ENCODE measurements at regions of chr6 and their contacts with region 1.

Region 1: DNA sequence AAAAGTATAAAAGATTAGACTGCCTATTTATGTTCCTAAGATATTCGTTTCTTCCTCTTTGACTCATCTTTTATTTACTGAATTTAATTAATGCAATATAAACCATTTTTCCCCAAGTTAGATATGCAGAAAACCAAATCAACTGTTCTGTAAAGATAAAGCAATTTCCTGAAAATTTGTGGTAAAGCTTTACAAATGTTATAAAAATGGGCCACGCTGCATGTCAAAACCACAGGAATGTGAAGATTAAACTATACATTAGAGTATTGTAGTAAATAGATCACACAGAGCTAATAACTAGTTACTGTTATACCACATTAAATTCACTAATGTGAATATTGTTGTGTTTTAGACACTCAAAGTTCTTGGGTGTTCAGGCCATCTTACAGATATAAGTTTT is 83.4 kb downstream of the OPN5 start:
- DNase-seq: no peak
- ATAC-seq: no peak
- H3K4me3 ChIP-seq: no peak overlapping the region
- H3K27ac ChIP-seq: no peak overlapping the region
- H3K4me1 ChIP-seq: no peaks in the 10 kb centered on the region
- H3K27me3 ChIP-seq: no peaks in the 10 kb centered on the region
- CTCF ChIP-seq: no peak

Region 2: DNA sequence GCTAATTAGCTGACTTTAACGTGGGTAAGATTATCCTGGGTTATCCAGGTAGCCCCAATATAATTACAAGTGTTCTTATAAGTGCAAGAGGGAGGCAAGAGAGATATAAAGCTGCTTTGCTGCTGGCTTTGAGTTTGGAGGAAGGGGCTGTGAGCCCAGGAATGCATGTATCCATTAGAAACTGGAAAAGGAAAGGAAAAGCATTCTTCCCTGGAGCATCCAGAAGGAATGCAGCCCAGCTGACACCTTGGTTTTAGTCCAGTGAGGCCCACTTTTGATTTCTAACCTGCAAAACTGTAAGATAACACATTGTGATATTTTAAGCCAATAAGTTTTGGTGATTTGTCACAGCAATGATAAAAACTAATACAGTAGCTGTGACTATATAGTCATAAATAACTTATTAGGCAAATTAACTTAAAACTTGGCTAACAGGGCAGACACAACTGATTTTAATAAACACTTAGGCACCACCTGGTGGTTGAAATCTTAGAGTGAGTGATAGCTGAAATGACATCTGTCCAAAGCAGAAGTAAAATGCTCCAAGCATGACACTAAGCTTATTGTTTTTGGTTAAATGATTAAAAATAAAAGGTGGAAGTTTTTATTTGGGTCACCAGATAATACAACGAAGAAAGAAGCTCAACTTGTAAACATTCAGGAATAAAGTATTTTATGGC is 131.2 kb before region 1 on chr6:
- CTCF ChIA-PET with region 1: no interaction called
- POLR2A ChIA-PET with region 1: interaction called, 10 read pairs
- in situ Hi-C with region 1: no loop called
- intact Hi-C with region 1: no loop called
- DNase-seq: no peak
- ATAC-seq: peak; percentile 65; the same call in 1 of the 2 replicates
- H3K4me3 ChIP-seq: no peak overlapping the region
- H3K27ac ChIP-seq: no peak overlapping the region
- H3K4me1 ChIP-seq: no peaks in the 10 kb centered on the region
- H3K27me3 ChIP-seq: no peaks in the 10 kb centered on the region
- CTCF ChIP-seq: peak; percentile 30; the same call in 1 of the 2 replicates

Measured in Panc1 (cell line).